ENCODE measurements at regions of chr11 and their contacts with region 1.

Region 1: GRCh38 chr11:110362971-110363509 is 66.6 kb upstream of the RDX start:
- DNase-seq: no peak
- H3K4me3 ChIP-seq: no peak overlapping the region
- H3K4me3 Mint-ChIP-seq: no peak overlapping the region
- H3K27ac ChIP-seq: no peak overlapping the region
- H3K27ac Mint-ChIP-seq: no peak overlapping the region
- H3K4me1 ChIP-seq: no peaks in the 10 kb centered on the region
- H3K4me1 Mint-ChIP-seq: no peaks in the 10 kb centered on the region
- H3K27me3 ChIP-seq: no peaks in the 10 kb centered on the region
- H3K27me3 Mint-ChIP-seq: no peaks in the 10 kb centered on the region

Region 2: DNA sequence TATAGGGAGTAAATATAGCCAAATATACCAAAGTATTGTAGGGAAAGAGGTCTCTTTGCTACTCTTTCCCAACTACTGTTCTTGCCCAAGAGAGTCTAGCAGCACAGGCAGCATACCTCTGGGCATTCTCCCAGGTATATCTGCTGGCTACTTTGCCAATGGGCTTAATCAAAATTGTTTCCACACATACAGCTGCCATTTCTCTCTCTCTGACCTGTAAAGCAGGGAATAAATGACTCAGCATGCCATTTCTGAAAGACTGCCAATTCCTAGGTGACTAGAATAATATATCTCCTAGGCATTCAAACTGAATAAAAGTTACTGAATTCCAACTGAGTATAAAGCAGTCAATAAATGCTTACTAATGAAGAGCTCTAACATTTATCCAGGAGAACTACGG is 111.2 kb before region 1 on chr11:
- CTCF ChIA-PET with region 1: no interaction called
- POLR2A ChIA-PET with region 1: no interaction called
- DNase-seq: no peak
- H3K4me3 ChIP-seq: no peak overlapping the region
- H3K4me3 Mint-ChIP-seq: no peak overlapping the region
- H3K27ac ChIP-seq: no peak overlapping the region
- H3K27ac Mint-ChIP-seq: peak overlapping the region in 1 of 8 donors; percentile 54
- H3K4me1 ChIP-seq: no peaks in the 10 kb centered on the region
- H3K4me1 Mint-ChIP-seq: no peaks in the 10 kb centered on the region
- H3K27me3 ChIP-seq: no peaks in the 10 kb centered on the region
- H3K27me3 Mint-ChIP-seq: no peaks in the 10 kb centered on the region

Region 3: GRCh38 chr11:110337570-110338193 is 25.4 kb before region 1 on chr11:
- CTCF ChIA-PET with region 1: no interaction called
- POLR2A ChIA-PET with region 1: no interaction called
- DNase-seq: no peak
- H3K4me3 ChIP-seq: no peak overlapping the region
- H3K4me3 Mint-ChIP-seq: no peak overlapping the region
- H3K27ac ChIP-seq: no peak overlapping the region
- H3K27ac Mint-ChIP-seq: no peak overlapping the region
- H3K4me1 ChIP-seq: no peaks in the 10 kb centered on the region
- H3K4me1 Mint-ChIP-seq: peaks cover 0 to 5% (median 2%) of the 10 kb centered on the region in 3 donors
- H3K27me3 ChIP-seq: no peaks in the 10 kb centered on the region
- H3K27me3 Mint-ChIP-seq: no peaks in the 10 kb centered on the region

Region 4: GRCh38 chr11:110497231-110497978 is 134.4 kb after region 1 on chr11:
- CTCF ChIA-PET with region 1: no interaction called
- POLR2A ChIA-PET with region 1: no interaction called
- DNase-seq: no peak
- H3K4me3 ChIP-seq: no peak overlapping the region
- H3K4me3 Mint-ChIP-seq: no peak overlapping the region
- H3K27ac ChIP-seq: no peak overlapping the region
- H3K27ac Mint-ChIP-seq: peak overlapping the region in 3 of 8 donors; percentile 21 to 51 (median 35)
- H3K4me1 ChIP-seq: no peaks in the 10 kb centered on the region
- H3K4me1 Mint-ChIP-seq: no peaks in the 10 kb centered on the region
- H3K27me3 ChIP-seq: no peaks in the 10 kb centered on the region
- H3K27me3 Mint-ChIP-seq: no peaks in the 10 kb centered on the region

Region 5: DNA sequence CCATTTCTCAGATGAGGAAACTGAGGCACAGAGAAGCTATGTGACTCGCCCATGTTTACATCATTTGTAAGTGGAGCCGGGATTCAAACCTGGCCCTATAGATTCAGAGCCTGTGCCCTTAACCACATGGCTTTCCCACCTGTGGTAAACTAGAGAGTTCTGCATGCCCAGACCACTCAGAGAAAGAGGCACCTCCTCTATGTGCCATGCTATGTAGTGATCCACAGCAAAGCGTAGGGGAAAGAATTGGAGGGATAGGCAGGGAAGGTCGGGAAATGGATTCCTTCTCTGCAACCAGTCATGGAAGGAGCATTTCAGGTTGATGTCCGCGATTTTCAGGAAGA is 867.1 kb after region 1 on chr11:
- CTCF ChIA-PET with region 1: no interaction called
- POLR2A ChIA-PET with region 1: interaction called, 11 read pairs
- DNase-seq: no peak
- H3K4me3 ChIP-seq: no peak overlapping the region
- H3K4me3 Mint-ChIP-seq: peak overlapping the region in 6 of 7 donors; percentile 53 to 89 (median 82)
- H3K27ac ChIP-seq: no peak overlapping the region
- H3K27ac Mint-ChIP-seq: peak overlapping the region in 1 of 8 donors; percentile 43
- H3K4me1 ChIP-seq: peaks cover 16% of the 10 kb centered on the region
- H3K4me1 Mint-ChIP-seq: peaks cover 14 to 17% (median 16%) of the 10 kb centered on the region in 3 donors
- H3K27me3 ChIP-seq: no peaks in the 10 kb centered on the region
- H3K27me3 Mint-ChIP-seq: peaks cover 25 to 31% of the 10 kb centered on the region in 2 donors